ENCODE measurements at regions of chr20 and their contacts with region 1.

Region 1: GRCh38 chr20:16801919-16802911 is 54.1 kb downstream of the OTOR start:
- DNase-seq: peak; percentile 57
- ATAC-seq: no peak

Region 2: GRCh38 chr20:16966276-16966880 is 164.2 kb after region 1 on chr20:
- intact Hi-C with region 1: no loop called
- DNase-seq: no peak
- ATAC-seq: no peak

Region 3: GRCh38 chr20:17010181-17010580 is 208.0 kb after region 1 on chr20:
- intact Hi-C with region 1: no loop called
- DNase-seq: no peak
- ATAC-seq: no peak

Region 4: DNA sequence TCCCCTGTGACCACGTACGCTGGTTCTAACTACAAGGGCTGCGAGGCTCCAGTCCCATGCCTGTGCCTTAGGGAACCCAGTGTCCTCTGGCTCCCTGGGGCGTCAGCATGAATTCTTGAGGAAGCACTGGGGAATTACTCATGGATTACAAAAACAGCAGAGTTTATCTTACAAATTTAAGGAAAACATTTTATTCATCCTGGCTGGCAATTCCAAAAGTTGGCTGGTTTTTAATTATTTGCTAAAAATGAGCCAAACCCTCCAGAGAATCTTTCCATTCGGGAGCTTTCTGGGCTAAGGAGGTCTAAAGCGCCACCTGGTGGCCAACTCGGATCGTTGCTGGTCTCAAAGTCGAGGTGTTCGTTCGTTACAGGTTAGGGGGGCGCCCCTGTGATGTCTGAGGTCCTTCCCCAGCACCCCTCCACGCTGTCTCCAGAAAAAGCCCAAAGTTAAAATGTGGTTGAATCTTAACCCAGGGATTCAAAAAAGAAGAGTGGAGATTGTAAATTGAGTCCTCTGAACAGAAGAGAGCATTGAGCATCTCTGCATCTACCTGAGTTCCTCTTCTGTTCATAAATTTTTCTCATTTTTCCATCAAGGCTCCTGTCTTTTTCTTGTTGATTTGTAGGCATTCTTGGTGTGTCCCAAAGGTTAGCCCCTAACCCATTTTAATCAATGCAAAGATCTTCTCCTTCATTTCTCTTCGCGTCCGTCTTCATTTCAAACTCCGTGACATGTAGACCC is 629.6 kb after region 1 on chr20:
- intact Hi-C with region 1: loop called (anchors 2 kb)
- DNase-seq: peak; percentile 58
- ATAC-seq: no peak

Region 5: GRCh38 chr20:17594443-17594842 is 792.2 kb after region 1 on chr20:
- intact Hi-C with region 1: no loop called
- DNase-seq: no peak
- ATAC-seq: peak; percentile 64

Region 6: GRCh38 chr20:18272451-18272850 is 1470.2 kb after region 1 on chr20:
- intact Hi-C with region 1: loop called (anchors 5 kb)
- DNase-seq: peak; percentile 63
- ATAC-seq: peak; percentile 81

Measured in Right ventricle myocardium superior (tissue), 1 donor.